ENCODE measurements at regions of chr15 and their contacts with region 1.

Region 1: DNA sequence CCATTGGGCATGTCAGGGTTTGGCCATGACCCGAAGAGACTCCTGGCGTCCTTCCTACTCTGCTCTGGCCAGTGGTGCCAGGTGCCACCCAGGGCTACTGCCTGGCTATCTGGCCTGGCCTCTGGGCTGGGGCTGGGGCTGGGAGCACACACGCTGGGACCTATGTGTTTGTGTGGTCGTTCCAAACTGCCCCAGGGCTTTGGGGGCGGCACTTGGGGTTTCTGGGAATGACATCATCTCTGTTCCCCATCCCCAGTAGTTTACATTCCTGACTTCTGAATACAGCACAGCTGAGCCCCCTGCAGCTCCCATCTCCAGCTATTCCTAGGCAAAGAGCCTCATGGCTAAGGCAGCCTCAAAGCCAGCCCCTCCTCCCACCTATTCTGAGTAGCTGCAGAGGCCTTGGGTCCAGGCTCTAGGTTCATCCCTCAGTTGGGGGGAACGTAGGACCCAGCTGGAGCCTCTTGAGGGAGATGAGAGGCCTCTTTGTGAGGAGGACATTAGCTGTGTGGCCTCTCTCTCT is 24.3 kb downstream of the PLEKHO2 start:
- DNase-seq: no peak
- ATAC-seq: no peak; the same call in 2 of the 3 replicates
- H3K4me3 ChIP-seq: no peak overlapping the region
- H3K27ac ChIP-seq: no peak overlapping the region
- H3K4me1 ChIP-seq: peaks cover 6% of the 10 kb centered on the region
- H3K27me3 ChIP-seq: no peaks in the 10 kb centered on the region
- CTCF ChIP-seq: no peak
- EP300 ChIP-seq: no peak
- POLR2A ChIP-seq: no peak
- RAD21 ChIP-seq: no peak

Region 2: GRCh38 chr15:64883997-64884511 is 18.0 kb after region 1 on chr15:
- CTCF ChIA-PET with region 1: interaction called, 5 read pairs
- POLR2A ChIA-PET with region 1: interaction called, 11 read pairs
- RAD21 ChIA-PET with region 1: interaction called, 14 read pairs
- SMC1A ChIA-PET with region 1: interaction called, 6 read pairs
- in situ Hi-C with region 1: no loop called
- intact Hi-C with region 1: no loop called
- DNase-seq: peak; percentile 79
- ATAC-seq: peak; percentile 92
- H3K4me3 ChIP-seq: no peak overlapping the region
- H3K27ac ChIP-seq: peak overlapping the region; percentile 85
- H3K4me1 ChIP-seq: peaks cover 30% of the 10 kb centered on the region
- H3K27me3 ChIP-seq: no peaks in the 10 kb centered on the region
- CTCF ChIP-seq: no peak
- EP300 ChIP-seq: peak; percentile 44 to 62; a peak in 2 of 4 replicates
- POLR2A ChIP-seq: peak; percentile 65
- RAD21 ChIP-seq: no peak

Measured in GM12878 (cell line).